AG04449 (cell line): ENCODE measurements at regions of chr9 and their contacts with region 1.

Region 1: DNA sequence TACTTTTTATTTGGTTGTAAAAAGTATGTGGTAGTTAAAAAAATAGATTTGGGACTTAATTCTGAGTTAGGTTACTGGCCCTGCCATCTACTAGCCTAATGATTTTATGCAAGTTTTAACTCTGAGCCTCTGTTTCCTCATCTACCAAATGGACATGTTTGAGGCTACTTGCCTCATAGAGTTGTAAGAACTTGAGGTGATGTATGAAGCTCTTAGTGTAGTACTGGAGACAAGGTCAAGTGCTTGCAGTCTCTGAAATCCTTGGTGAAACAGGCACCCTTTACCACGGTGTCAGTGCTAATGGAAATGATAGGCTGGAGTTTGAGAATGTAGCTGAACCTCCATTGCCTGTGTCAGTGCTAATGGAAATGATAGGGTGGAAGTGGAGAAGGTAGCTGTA is 15.3 kb downstream of the GPR107 start:
- DNase-seq: no peak
- H3K4me3 ChIP-seq: no peak overlapping the region
- CTCF ChIP-seq: no peak

Region 2: GRCh38 chr9:130053504-130054324 is 15.3 kb before region 1 on chr9 and contains the start of gene GPR107:
- CTCF ChIA-PET with region 1: interaction called, 12 read pairs
- POLR2A ChIA-PET with region 1: no interaction called
- DNase-seq: no peak
- H3K4me3 ChIP-seq: peak within 1 kb of the TSS; percentile 82
- CTCF ChIP-seq: no peak

Region 3: DNA sequence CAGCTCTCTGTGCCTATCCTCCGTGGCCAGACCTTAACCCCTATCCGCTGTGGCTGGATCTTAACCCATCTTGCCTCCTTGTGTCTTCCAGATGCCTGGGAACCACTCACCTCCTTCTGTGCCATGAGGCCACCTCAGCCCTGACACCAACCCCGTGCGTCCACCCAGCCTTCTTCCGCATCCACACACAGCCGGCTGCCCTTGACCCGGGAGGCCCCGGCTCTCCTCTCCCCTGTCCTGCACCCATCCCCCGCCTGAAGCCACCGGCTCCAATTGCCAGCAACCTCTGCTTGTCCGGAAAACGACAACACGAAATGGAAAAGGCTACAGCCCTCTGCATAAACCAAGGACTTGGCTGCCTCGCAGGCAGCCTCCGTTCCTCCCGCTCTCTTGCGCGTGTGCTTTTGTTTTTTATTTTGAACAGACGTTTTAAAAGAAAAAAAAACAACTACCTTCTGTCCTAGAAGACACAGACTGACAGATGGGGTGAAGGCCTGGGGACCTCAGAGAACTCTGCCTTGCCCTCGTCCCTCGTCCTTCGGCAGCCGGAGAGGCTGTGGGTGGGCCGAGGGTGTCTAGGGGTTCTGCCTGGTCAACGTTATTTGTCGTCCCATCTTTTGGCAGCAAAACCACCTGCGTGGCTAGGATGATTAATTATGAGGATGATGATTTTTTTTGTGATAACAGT is 164.0 kb after region 1 on chr9:
- CTCF ChIA-PET with region 1: no interaction called
- POLR2A ChIA-PET with region 1: no interaction called
- DNase-seq: no peak
- H3K4me3 ChIP-seq: no peak overlapping the region
- CTCF ChIP-seq: no peak